MCF 10A (cell line): ENCODE measurements at regions of chr12 and their contacts with region 1.

Region 1: DNA sequence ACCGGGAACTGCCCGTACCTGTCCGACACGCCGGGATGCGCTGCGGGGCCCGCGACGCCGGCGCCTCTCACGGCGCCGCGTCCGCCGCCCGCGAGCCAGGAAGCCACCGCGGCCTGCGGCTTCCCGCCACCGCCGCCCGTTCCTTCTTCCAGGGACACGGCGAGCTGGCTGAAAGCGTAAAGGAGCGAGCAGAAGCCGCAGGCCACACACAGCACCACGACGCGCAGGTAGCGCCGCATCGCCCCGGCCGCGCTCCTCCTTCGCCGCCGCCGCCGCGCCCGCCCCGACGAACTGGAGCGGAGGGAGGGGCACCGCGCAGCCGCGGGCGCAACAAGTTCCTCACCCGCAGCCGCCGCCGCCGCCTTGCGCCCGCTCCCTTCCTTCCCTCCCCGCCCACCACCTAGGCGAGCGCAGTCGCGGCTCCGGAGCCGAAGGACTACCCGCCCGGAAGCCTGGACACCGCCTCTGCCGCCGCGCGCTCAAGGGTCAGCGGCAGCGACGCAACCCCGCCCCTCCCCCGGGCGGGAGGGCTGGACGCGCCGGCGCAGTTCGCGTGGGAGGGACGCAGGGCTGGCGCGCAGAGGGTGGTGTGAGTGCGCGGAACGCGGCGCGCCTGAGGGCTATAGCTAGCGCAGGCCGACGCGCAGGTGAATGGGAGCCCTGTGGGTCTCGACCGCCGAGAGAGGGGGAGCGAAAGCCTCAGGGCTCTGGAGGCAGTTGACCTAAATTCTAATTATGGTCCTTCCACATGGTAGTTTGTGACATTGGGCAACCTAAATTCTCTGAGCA is at the start of gene GXYLT1:
- DNase-seq: peak; percentile 94
- H3K4me3 Mint-ChIP-seq: peak within 1 kb of the TSS; percentile 85
- H3K27ac Mint-ChIP-seq: peak within 1 kb of the TSS; percentile 92
- H3K4me1 Mint-ChIP-seq: peaks cover 30% of the 10 kb centered on the region
- H3K27me3 Mint-ChIP-seq: no peaks in the 10 kb centered on the region
- CTCF ChIP-seq: no peak
- total RNA-seq, gene GXYLT1: 12.4 and 14.6 TPM in 2 replicates

Region 2: DNA sequence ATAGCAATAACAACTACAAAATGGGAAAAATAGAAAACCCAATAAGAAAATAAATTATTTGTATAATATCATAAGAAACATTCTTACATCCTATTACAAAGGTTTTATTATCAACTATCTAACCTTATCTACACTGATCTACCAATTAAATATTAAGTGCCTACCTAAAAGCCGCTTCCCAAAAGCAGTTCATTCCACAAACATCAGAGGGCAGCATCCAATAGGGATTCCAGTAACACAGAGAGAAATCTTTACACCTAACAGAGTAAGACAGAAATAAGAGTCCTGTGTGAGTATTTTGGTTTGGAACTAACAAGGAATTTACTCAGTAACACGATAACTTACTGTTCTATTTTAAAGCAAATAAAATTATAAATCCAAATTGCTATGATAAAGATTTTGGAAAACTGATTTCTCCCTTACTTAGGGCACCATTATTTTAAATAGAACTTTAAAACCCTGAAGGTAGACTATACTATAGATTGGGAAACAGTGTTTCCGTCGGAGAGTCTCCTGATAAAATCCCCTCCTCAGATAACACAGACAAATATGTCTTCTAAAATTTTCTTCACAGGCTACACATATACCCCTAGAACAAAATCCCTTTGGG is 14.9 kb before region 1 on chr12:
- CTCF ChIA-PET with region 1: interaction called, 5 read pairs
- POLR2A ChIA-PET with region 1: interaction called, 14 read pairs
- intact Hi-C with region 1: no loop called
- DNase-seq: peak; percentile 81
- H3K4me3 Mint-ChIP-seq: peak overlapping the region; percentile 66
- H3K27ac Mint-ChIP-seq: peak overlapping the region; percentile 74
- H3K4me1 Mint-ChIP-seq: peaks cover 26% of the 10 kb centered on the region
- H3K27me3 Mint-ChIP-seq: no peaks in the 10 kb centered on the region
- CTCF ChIP-seq: peak; percentile 73

Region 3: DNA sequence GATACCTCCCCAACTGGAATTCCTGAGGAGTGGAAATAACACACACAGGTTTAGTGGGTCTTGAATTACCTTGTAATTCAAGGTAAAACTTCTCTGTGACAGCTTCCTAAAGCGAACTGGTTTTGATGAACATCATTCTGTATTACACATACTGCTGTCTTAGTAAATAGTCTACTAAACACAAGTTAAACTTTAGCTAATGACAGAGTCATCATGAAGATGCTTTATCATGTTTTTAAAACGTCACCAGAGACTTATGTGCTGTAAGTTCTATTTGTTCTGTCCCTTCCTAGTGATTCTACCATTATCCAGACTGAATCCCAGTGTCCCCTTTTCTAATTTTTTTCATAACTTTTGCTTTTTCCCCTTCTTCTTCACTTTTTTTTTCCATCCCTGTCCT is 11.6 kb after region 1 on chr12:
- CTCF ChIA-PET with region 1: interaction called, 4 read pairs
- POLR2A ChIA-PET with region 1: interaction called, 20 read pairs
- intact Hi-C with region 1: no loop called
- DNase-seq: no peak
- H3K4me3 Mint-ChIP-seq: no peak overlapping the region
- H3K27ac Mint-ChIP-seq: no peak overlapping the region
- H3K4me1 Mint-ChIP-seq: no peaks in the 10 kb centered on the region
- H3K27me3 Mint-ChIP-seq: no peaks in the 10 kb centered on the region
- CTCF ChIP-seq: no peak

Region 4: DNA sequence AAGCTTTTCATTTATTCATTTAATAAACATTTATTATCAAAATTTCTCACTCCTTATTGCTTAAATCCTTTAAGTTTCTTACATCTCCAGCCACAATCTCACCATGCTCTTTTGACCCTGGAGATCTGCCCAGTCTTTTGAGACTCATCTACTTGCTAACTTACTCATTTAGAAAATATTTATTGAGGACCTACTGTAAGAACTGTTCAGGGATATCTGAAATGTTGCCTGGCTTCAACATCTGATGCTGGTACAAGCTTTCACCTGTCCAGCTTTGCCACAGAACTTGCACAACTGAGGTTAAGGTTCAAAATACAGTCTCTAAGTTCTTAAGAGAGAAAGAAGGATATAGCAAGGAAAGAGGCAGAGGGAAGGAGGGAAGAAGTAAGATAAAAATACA is 17.6 kb after region 1 on chr12:
- CTCF ChIA-PET with region 1: interaction called, 4 read pairs
- POLR2A ChIA-PET with region 1: interaction called, 20 read pairs
- intact Hi-C with region 1: no loop called
- DNase-seq: peak; percentile 29
- H3K4me3 Mint-ChIP-seq: no peak overlapping the region
- H3K27ac Mint-ChIP-seq: no peak overlapping the region
- H3K4me1 Mint-ChIP-seq: peaks cover 12% of the 10 kb centered on the region
- H3K27me3 Mint-ChIP-seq: no peaks in the 10 kb centered on the region
- CTCF ChIP-seq: no peak

Region 5: DNA sequence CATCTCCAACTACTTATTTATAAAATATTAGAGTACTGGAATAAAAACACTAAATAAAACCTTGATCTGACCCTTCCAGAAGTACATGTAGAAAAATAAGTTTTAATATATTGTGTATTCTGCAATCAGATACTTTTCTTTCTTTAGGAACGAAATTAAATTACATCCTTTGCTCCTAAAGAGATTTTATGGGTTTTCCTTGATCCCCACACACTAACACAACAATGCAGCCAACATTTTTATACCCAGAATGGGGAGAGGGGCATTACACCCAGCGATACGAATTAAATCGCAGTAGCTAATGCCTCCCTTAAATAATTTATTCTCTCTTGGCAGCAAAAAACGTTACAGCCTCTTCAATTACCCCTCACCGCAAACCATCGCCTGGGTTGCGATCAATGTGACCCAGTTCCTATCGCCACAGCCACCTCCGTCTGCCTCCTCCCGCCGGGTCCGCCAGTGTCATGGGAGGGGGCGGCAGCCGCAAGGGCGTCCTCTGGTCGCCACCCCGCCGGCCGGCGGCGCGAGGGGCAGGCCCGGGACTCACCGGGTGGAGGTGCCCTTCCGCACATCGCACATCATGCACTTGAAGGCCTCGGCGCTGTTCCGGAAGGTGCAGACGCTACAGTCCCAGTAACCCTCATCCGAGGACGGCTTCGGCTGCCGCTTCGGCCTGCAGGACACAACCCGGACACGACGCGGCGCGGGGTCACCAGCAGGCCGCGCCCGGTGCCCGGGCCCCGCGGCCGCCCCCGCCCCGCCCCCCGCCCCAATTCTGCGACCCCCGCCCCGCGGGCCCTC is 92.7 kb after region 1 on chr12:
- CTCF ChIA-PET with region 1: interaction called, 3 read pairs
- POLR2A ChIA-PET with region 1: interaction called, 18 read pairs
- intact Hi-C with region 1: no loop called
- DNase-seq: peak; percentile 72
- H3K4me3 Mint-ChIP-seq: peak overlapping the region; percentile 95
- H3K27ac Mint-ChIP-seq: peak overlapping the region; percentile 97
- H3K4me1 Mint-ChIP-seq: peaks cover 19% of the 10 kb centered on the region
- H3K27me3 Mint-ChIP-seq: no peaks in the 10 kb centered on the region
- CTCF ChIP-seq: peak; percentile 26